ENCODE measurements at regions of chr9 and their contacts with region 1.

Region 1: GRCh38 chr9:111597817-111598729 is 1.4 kb downstream of the PTGR1 start:
- DNase-seq: peak in 1 of 2 donors; percentile 70
- H3K4me3 ChIP-seq: peak overlapping the region; percentile 74 to 85
- H3K27ac ChIP-seq: peak overlapping the region; percentile 78 to 86
- H3K4me1 ChIP-seq: peaks cover 0 to 7% of the 10 kb centered on the region in 2 donors
- H3K27me3 ChIP-seq: no peaks in the 10 kb centered on the region
- CTCF ChIP-seq: peak; percentile 2 to 81 (median 69)

Region 2: DNA sequence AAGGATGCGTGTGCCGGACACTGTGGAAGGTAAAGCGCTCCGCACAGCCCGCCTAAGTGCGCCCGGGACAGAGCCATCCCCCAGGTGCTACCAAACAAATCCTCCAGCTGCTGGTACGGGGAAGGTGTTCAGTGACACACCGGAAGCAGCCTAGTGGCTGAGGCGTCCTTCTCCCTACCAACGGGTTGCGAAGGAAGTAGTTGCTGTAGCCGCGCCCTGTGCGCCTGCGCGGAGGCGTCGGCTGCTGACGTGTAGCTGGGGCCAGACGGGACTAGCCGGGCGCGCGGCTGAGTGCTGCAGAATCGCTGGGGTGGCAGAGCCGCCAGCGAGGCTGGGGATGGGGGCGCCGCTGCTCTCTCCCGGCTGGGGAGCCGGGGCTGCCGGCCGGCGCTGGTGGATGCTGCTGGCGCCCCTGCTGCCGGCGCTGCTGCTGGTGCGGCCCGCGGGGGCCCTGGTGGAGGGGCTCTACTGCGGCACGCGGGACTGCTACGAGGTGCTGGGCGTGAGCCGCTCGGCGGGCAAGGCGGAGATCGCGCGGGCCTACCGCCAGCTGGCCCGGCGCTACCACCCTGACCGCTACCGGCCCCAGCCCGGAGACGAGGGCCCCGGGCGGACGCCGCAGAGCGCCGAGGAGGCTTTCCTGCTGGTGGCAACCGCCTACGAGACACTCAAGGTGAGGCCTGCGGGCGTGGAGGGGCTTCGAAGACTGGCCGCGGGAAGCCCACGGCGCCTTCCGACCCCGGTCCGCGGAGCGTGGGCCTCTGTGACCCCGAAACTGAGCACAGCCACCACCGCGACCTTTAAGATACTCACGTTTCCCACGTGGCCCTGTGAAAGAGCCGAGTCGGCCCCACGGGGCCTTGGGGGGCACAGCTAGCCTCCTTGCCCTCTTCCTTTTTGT is 33.2 kb after region 1 on chr9 and contains the start of gene DNAJC25:
- intact Hi-C with region 1: loop called (anchors 1 kb)
- DNase-seq: peak; percentile 91 to 98
- H3K4me3 ChIP-seq: peak within 1 kb of the TSS; percentile 92 to 99
- H3K27ac ChIP-seq: peak within 1 kb of the TSS; percentile 84 to 92
- H3K4me1 ChIP-seq: peaks cover 0 to 13% of the 10 kb centered on the region in 2 donors
- H3K27me3 ChIP-seq: no peaks in the 10 kb centered on the region
- CTCF ChIP-seq: no peak
- total RNA-seq, gene DNAJC25: 2.2 TPM

Region 3: DNA sequence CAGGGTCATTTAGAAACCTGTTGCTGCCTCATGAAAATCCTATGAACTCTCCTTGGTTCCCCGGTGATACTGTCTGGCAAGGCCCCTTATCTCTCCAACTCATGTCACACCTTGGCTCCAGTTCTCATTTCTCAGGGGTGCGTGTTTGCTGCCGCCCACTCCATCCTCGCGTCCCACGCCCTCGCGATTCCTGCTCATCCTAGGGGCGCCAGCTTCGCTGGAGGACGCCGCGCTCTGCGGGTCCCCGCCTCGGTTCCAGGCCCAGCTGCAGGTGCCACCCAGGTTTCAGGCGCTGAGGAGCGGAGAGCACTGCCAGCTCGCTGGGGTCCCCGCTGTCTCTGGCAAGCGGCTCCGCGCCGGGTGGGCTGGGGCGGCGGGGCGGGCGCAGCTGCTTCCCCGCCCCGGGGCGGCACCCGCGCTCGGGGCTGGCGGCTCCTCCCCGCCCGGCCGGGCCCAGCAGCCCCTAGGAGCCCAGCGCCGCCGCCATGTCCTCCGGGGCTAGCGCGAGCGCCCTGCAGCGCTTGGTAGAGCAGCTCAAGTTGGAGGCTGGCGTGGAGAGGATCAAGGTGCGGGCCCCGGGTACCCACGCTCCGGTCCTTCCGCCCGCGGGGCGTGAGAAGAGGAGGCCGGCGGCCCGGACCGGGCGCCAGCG is 63.2 kb after region 1 on chr9 and contains the start of gene GNG10:
- intact Hi-C with region 1: loop called (anchors 2 kb)
- DNase-seq: peak in 1 of 2 donors; percentile 73
- H3K4me3 ChIP-seq: peak within 1 kb of the TSS; percentile 90
- H3K27ac ChIP-seq: peak within 1 kb of the TSS; percentile 75 to 79
- H3K4me1 ChIP-seq: peaks cover 0 to 6% of the 10 kb centered on the region in 2 donors
- H3K27me3 ChIP-seq: no peaks in the 10 kb centered on the region
- CTCF ChIP-seq: no peak
- total RNA-seq, gene GNG10: 23.8 TPM

Region 4: DNA sequence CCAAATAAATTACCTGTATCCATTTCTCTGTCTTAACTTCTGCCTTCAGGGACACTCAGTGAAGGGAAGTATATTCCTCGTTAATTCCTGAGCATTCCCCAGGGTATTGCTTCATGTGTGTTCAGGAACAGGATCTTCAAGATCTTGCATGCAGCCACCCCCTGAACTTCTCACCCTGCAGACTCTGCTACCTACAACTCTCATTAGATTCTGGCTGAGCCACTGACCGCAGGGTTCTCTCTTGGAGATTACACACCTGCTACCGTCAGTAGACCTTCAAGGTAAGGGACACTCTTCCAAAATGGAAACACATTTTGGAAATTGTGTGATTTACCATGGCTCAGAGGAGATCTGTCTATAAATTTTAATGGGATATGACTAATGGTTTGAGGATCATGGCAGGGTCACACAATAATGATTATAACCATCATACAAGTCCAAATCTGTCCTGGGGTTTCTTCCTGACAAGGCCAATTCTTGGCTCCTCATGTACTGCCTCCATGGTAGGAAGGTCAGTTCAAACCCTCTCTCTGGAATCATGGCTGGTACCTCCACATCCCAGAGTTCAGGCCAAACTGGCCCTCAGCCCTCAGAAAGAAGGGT is 259.6 kb after region 1 on chr9:
- intact Hi-C with region 1: no loop called
- DNase-seq: no peak
- H3K4me3 ChIP-seq: no peak overlapping the region
- H3K27ac ChIP-seq: no peak overlapping the region
- H3K4me1 ChIP-seq: no peaks in the 10 kb centered on the region
- H3K27me3 ChIP-seq: no peaks in the 10 kb centered on the region
- CTCF ChIP-seq: no peak

Region 5: DNA sequence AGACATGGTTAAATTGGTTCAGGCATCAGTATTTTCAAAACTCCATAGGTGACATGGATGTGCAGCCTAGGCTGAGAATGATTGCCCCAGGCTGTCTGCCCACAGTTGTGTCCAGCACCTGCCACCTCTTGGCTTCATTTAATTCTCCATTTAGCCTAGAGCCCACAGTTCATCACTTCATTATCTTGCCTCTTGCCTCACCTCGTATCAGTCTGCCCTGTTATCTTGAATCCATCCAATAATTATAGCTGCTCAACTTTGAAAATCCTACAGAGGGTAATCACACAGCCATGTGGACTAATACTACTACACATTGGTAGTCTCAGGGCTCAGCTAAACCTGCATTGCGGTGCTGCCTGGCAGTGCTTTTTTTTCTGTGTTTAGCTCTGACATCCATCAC is 305.9 kb after region 1 on chr9:
- intact Hi-C with region 1: no loop called
- DNase-seq: no peak
- H3K4me3 ChIP-seq: no peak overlapping the region
- H3K27ac ChIP-seq: no peak overlapping the region
- H3K4me1 ChIP-seq: peaks cover 0 to 39% of the 10 kb centered on the region in 2 donors
- H3K27me3 ChIP-seq: no peaks in the 10 kb centered on the region
- CTCF ChIP-seq: no peak

Region 6: GRCh38 chr9:112074250-112075008 is 476.4 kb after region 1 on chr9:
- intact Hi-C with region 1: loop called (anchors 5 kb)
- DNase-seq: peak in 1 of 2 donors; percentile 82
- H3K4me3 ChIP-seq: peak overlapping the region in 1 of 2 donors; percentile 21
- H3K27ac ChIP-seq: peak overlapping the region; percentile 54 to 65
- H3K4me1 ChIP-seq: no peaks in the 10 kb centered on the region
- H3K27me3 ChIP-seq: no peaks in the 10 kb centered on the region
- CTCF ChIP-seq: peak; percentile 89 to 94 (median 91)

Measured in ascending aorta (tissue), 2 donors.